ENCODE measurements at regions of chr19 and their contacts with region 1.

Region 1: DNA sequence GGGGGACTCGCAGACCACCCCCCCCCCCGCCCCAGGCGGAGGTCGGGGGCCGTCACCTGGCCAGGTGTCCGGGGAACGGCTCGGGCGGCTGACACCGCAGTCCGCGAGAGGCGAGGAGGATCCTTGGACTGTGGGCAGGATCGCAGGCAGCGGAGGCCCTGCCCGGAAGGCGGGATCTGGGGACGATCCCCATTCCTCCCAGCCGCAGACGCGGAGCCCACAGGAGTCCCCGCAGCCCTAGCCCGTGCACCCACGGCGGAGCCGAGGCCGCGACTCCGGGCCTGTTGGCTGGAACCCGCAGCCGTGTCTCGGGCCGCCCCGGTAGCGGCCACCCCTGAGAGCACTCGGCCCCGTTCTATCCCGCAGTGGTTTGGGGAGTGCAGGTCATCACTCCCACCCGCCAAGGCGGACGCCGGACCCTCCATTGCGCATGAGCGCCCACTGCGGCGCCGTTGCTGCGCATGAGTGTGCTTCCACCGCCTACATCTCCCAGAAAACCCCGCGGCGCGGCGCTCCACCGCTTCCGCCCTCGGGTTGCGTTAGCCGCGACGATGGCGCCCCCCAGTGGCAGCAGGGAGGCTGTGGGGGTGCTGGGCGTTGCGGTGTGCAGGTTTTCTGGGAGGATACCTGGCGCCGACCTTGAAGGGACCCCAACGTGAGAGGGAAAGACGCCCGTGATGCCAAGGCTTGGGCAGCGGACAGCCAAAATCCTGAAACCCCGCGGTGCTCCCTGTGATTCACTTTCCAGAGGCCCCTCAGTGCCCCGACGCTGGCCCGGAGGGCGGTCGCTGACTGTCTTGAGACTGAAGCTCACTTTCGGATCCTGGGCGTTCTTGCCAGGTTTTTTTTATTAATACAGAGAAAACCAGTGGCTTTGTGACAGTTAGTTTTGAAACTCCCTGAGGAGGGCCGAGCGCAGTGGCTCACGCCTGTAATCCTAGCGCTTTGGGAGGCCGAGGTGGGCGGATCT is 4.4 kb upstream of the ZNF329 start:
- DNase-seq: peak; percentile 97 to 99 (median 97)
- ATAC-seq: peak; percentile 93 to 98 (median 98)
- H3K4me3 ChIP-seq: peak overlapping the region; percentile 70 to 99 (median 90)
- H3K27ac ChIP-seq: peak overlapping the region; percentile 73 to 97 (median 93)
- H3K4me1 ChIP-seq: peaks cover 0 to 41% (median 22%) of the 10 kb centered on the region in 12 donors
- H3K27me3 ChIP-seq: no peaks in the 10 kb centered on the region
- CTCF ChIP-seq: peak; percentile 96 to 99 (median 99)
- POLR2A ChIP-seq: peak in 1 of 2 donors; percentile 82

Region 2: DNA sequence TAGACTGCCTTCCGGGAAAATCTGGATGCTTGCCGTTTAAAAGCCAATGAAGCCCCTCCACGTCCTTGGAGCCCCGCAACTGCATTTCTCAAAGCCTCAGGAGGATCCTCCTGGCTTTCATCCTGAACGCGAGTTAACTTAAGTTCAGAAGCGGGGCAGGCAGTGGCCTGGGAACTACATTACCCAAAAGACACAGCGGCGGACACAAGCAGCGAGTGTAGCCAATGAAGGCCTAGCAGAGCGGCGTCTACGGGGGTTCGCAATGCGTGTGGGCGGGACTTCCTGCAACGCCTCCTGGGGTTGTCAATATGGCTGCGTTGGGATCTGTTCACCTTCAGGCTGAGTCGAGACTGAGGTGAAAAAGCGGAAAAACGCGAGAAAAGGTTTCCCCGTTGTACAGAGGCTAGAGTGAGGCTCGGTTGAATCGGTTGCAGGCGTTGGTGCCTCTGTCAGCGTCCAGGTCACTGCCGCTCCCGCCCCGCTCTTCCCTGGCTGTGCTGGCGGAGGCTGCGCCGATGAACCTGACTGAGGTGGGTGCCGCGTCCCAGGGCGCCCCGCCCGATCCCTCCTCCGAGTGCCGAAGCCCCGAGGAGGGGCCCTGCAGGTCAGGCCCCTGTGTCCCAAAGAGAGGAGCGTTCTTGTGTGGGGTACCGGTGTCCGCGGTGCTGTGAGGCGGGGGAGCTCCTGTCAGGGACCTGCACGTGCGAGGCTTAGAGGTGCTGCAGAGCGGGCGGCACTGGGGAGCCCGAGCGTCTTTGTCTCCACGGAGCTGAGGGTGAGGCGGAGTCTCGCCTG is 743.9 kb before region 1 on chr19 and contains the start of gene ZNF17:
- intact Hi-C with region 1: loop called in 1 of 10 experiments (anchors 10 kb)
- DNase-seq: peak; percentile 94 to 96 (median 95)
- ATAC-seq: peak; percentile 99 to 100 (median 100)
- H3K4me3 ChIP-seq: peak within 1 kb of the TSS; percentile 73 to 98 (median 88)
- H3K27ac ChIP-seq: peak within 1 kb of the TSS; percentile 55 to 84 (median 80)
- H3K4me1 ChIP-seq: peaks cover 0 to 37% (median 15%) of the 10 kb centered on the region in 12 donors
- H3K27me3 ChIP-seq: no peaks in the 10 kb centered on the region
- CTCF ChIP-seq: no peak
- POLR2A ChIP-seq: peak in 1 of 2 donors; percentile 71
- total RNA-seq, gene ZNF17: 3.9 to 13.5 (median 9.0) TPM

Region 3: DNA sequence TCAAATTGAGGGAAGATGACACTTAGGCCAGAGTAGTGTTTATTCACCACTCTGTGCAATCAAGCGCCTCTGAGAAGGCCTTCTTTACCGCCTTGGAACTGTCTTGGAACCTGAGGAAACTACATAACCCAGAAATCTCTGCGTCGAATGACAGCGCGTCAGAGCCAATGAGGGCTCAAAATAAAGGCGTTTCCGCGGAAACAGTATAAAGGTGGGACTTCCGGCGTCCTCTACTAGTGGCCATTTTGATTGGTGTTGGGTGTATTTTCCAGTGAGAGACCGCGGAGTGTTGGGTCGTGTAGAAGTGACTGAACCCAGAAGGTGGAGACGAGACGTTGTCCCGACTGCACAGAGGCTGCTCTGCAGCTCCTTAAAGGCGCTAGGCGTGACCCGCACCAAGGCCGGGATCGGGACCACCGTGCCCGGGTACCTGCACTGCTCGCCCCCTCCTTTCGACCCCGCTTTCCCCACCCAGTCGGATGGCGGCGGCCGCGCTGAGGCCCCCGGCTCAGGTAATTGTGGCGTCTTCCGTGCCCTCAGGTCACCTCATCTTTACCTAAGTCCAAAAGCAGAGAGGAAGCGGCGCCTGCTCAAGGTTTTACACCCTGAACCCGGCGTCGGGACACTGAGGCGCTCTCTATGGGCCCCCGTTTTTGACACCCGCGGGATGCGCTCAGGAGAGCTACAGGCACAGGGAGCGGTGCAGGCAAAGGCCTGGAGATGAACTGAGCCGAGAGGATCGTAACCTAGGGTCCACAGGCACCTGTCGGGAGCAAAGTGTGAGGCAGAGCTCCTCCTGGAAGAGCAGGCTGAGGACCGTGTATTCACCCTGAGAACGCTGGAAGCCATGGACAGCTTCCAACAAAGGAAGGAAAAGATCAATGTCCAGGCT is 408.1 kb before region 1 on chr19 and contains the start of gene ZNF776:
- intact Hi-C with region 1: loop called in 4 of 10 experiments (anchors 5 to 10 kb)
- DNase-seq: peak; percentile 79 to 89 (median 88)
- ATAC-seq: peak; percentile 93 to 99 (median 98)
- H3K4me3 ChIP-seq: peak within 1 kb of the TSS; percentile 62 to 99 (median 90)
- H3K27ac ChIP-seq: peak within 1 kb of the TSS; percentile 45 to 91 (median 84)
- H3K4me1 ChIP-seq: peaks cover 0 to 29% (median 15%) of the 10 kb centered on the region in 12 donors
- H3K27me3 ChIP-seq: no peaks in the 10 kb centered on the region
- CTCF ChIP-seq: no peak
- POLR2A ChIP-seq: peak in 1 of 2 donors; percentile 63
- total RNA-seq, gene ZNF776: 8.1 to 17.3 (median 12.9) TPM

Region 4: GRCh38 chr19:58021541-58022282 is 133.3 kb before region 1 on chr19:
- intact Hi-C with region 1: loop called (anchors 1 to 2 kb)
- DNase-seq: peak in 4 of 5 donors; percentile 58 to 70 (median 66)
- ATAC-seq: peak; percentile 91 to 97 (median 94)
- H3K4me3 ChIP-seq: no peak overlapping the region
- H3K27ac ChIP-seq: no peak overlapping the region
- H3K4me1 ChIP-seq: peaks cover 0 to 6% (median 0%) of the 10 kb centered on the region in 12 donors
- H3K27me3 ChIP-seq: no peaks in the 10 kb centered on the region
- CTCF ChIP-seq: peak; percentile 42 to 83 (median 78)
- POLR2A ChIP-seq: no peak

Measured in heart left ventricle (tissue), 16 donors.